Left cardiac atrium (tissue), 4 donors: ENCODE measurements at regions of chr4 and their contacts with region 1.

Region 1: GRCh38 chr4:149999485-150000074 is 78.7 kb upstream of the DCLK2 start:
- DNase-seq: peak; percentile 25
- ATAC-seq: peak; percentile 55 to 69

Region 2: GRCh38 chr4:149923736-149924135 is 75.8 kb before region 1 on chr4:
- intact Hi-C with region 1: no loop called
- DNase-seq: no peak
- ATAC-seq: no peak

Region 3: GRCh38 chr4:150242820-150243458 is 243.4 kb after region 1 on chr4:
- intact Hi-C with region 1: loop called (anchors 2 to 5 kb)
- DNase-seq: no peak
- ATAC-seq: peak in 1 of 2 donors; percentile 45

Region 4: GRCh38 chr4:150625033-150625432 is 625.5 kb after region 1 on chr4:
- intact Hi-C with region 1: no loop called
- DNase-seq: no peak
- ATAC-seq: no peak